Activated T-helper 2 cell treated with anti-CD3 and anti-CD28 coated beads, Interferon-gamma antibody, Interleukin-2, Interleukin-4, amounts not matched to agents 10 μg/mL and 5 μg/mL and 100 μg/mL, durations not matched to agents 14 hours and 24 hours and 36 hours (primary cell): ENCODE measurements at regions of chr3 and their contacts with region 1.

Region 1: GRCh38 chr3:107235928-107236315 is 141.3 kb upstream of the CCDC54 start:
- DNase-seq: peak; percentile 28
- H3K4me3 Mint-ChIP-seq: peak overlapping the region; percentile 71
- H3K27ac Mint-ChIP-seq: no peak overlapping the region
- H3K4me1 Mint-ChIP-seq: peaks cover 11% of the 10 kb centered on the region
- H3K27me3 Mint-ChIP-seq: peaks cover 23% of the 10 kb centered on the region

Region 2: DNA sequence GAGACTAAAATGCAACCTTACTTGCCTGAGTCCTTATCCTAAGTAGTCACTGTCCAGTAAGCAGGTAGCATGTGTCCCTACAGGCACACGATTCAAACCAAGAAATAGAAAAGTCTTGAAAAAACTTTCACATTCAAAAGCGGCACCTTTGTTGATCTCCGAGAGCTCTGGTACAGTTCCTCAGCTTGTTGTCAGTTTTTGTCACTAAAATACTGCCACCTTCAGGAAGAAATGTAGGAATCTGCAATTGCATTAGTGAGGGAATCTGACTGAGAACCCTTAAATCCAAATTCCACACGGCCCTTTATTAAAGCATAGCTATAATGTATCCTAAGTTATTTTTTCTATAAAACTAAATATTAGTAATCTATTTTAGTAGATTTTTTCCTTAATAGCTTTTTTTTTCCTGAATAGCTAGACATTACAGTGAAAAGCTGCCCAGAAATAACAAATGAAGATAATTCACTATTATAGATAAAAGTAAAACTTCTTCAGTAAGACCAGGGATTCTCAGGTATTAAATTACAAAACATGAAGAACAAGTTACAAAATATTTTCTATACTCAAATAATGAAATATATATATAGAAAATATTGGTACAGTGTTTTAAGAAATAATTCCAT is 185.4 kb after region 1 on chr3:
- intact Hi-C with region 1: loop called (anchors 1 kb)
- DNase-seq: no peak
- H3K4me3 Mint-ChIP-seq: no peak overlapping the region
- H3K27ac Mint-ChIP-seq: no peak overlapping the region
- H3K4me1 Mint-ChIP-seq: peaks cover 2% of the 10 kb centered on the region
- H3K27me3 Mint-ChIP-seq: peaks cover 45% of the 10 kb centered on the region

Region 3: GRCh38 chr3:107522510-107523288 is 286.8 kb after region 1 on chr3 and contains the start of gene BBX:
- intact Hi-C with region 1: loop called (anchors 2 kb)
- DNase-seq: peak; percentile 93
- H3K4me3 Mint-ChIP-seq: peak within 1 kb of the TSS; percentile 96
- H3K27ac Mint-ChIP-seq: peak within 1 kb of the TSS; percentile 95
- H3K4me1 Mint-ChIP-seq: peaks cover 19% of the 10 kb centered on the region
- H3K27me3 Mint-ChIP-seq: peaks cover 2% of the 10 kb centered on the region
- total RNA-seq, gene BBX: 35.8 and 39.8 TPM in 2 replicates

Region 4: DNA sequence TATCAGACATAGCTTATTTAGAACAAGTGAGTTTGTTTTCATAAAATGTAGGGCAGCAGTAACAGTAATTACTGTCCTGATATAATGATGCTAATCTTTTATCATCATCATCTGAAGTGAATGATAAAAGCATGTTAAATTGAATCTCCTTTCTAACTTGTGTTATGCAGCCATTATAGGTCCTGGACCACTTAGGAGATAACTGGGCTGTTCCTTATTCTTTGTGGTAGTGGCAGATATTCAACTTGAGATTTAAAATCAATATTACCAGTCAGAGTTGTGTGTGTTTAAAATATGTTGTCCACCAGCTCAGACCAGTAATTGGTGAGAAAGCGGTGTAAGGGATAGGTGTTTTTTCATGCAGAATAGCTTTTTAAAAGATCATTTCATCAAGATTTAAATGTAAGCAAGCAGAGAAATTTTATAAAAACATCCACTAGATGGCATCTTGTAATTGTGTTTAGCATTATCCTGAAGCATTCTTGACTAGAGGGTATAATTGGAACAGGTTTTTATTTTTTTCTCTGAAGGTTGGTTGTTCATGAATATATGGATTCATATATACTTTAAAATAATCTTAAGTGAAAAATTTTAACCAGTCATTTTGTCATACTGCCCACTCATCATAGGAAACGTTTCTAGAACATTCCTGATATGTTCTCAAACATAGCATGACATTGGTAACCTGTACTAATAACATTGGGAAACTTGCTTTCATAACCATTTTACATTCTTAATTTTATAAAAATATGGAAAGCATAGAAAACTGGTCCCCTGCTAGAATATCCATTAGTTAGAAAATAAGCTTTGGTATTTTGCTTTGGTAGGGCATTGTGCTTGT is 440.8 kb after region 1 on chr3:
- intact Hi-C with region 1: loop called (anchors 5 kb)
- DNase-seq: no peak
- H3K4me3 Mint-ChIP-seq: no peak overlapping the region
- H3K27ac Mint-ChIP-seq: no peak overlapping the region
- H3K4me1 Mint-ChIP-seq: peaks cover 27% of the 10 kb centered on the region
- H3K27me3 Mint-ChIP-seq: no peaks in the 10 kb centered on the region

Region 5: DNA sequence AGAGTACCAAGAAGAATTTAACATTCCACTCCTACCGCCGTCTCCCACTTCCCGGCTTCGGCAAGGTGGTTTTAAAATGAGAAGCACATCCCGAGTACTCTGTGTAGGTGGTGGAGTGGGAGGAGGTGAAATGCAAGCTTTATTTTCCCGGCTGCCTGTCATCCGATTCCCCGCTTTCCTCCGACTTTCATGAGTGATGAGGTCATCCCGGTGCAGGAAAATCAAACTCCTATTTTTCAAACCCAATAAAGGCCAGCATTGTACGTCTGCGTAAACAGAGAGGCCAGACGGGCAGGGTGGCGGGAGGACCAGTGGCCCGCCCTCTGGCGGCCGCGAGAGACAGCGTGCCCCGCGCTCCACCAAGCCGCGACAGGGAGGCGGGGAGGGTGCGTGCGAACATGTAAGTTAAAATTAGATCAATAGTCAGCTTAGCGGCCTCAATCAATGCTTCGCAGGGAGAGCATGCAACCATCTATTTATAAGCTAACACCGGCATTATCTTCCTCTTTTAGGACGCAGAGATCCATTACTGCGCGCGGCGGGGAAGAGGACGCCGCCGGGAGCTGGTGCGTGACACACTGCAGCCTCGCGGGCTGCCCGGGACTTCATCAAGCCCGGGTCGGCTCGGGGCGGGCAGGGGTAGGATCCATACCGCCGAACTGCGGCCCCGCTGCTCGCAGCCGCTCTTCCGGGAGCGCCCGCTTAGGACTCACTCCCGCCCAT is 691.6 kb after region 1 on chr3:
- intact Hi-C with region 1: loop called (anchors 5 kb)
- DNase-seq: peak; percentile 56
- H3K4me3 Mint-ChIP-seq: peak overlapping the region; percentile 90
- H3K27ac Mint-ChIP-seq: peak overlapping the region; percentile 77
- H3K4me1 Mint-ChIP-seq: peaks cover 15% of the 10 kb centered on the region
- H3K27me3 Mint-ChIP-seq: peaks cover 14% of the 10 kb centered on the region